Gastrocnemius medialis (tissue), 4 donors: ENCODE measurements at regions of chr19 and their contacts with region 1.

Region 1: GRCh38 chr19:10717356-10718204 is at the start of gene DNM2:
- DNase-seq: peak; percentile 100
- ATAC-seq: peak; percentile 94 to 97
- H3K4me3 ChIP-seq: peak within 1 kb of the TSS; percentile 71 to 98 (median 82)
- H3K27ac ChIP-seq: peak within 1 kb of the TSS; percentile 82 to 99 (median 94)
- H3K4me1 ChIP-seq: peaks cover 25 to 27% of the 10 kb centered on the region in 2 donors
- H3K27me3 ChIP-seq: no peaks in the 10 kb centered on the region
- CTCF ChIP-seq: peak; percentile 77 to 90 (median 83)
- POLR2A ChIP-seq: peak; percentile 82 to 89
- total RNA-seq, gene DNM2: 76.2 to 131 (median 108) TPM

Region 2: DNA sequence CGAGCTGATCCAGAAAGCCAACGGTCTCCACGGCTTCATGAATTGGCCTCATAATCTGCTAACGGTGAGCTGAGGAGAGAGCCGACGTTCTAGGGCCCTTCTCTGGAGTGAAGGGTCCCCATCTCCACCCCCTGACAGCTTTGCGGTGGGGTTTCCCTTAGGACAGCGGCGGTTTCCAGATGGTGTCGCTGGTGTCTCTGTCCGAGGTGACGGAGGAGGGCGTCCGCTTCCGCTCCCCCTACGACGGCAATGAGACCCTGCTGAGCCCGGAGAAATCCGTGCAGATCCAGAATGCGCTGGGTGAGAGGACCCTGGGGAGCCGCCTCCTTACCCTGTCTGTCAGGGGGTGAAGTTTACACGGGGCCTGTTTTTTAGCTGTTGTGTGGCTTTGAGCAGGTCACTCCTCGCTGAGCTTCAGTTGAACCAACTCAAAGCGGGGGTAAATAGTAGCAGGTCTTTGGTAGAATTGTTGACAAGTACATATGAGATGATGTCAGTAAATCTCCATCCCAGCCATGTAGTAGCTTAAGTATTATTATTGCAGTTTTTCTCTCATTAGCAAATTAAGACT is 15.5 kb before region 1 on chr19:
- in situ Hi-C with region 1: no loop called
- intact Hi-C with region 1: loop called (anchors 1 kb)
- DNase-seq: no peak
- ATAC-seq: peak; percentile 5 to 11
- H3K4me3 ChIP-seq: peak overlapping the region; percentile 84 to 100 (median 90)
- H3K27ac ChIP-seq: peak overlapping the region; percentile 70 to 87 (median 80)
- H3K4me1 ChIP-seq: peaks cover 12 to 13% of the 10 kb centered on the region in 2 donors
- H3K27me3 ChIP-seq: no peaks in the 10 kb centered on the region
- CTCF ChIP-seq: no peak
- POLR2A ChIP-seq: no peak

Region 3: GRCh38 chr19:10769533-10770491 is 52.2 kb after region 1 on chr19:
- in situ Hi-C with region 1: loop called in 1 of 4 experiments (anchors 5 kb)
- intact Hi-C with region 1: loop called (anchors 1 kb)
- DNase-seq: peak; percentile 69 to 80
- ATAC-seq: peak; percentile 94 to 96
- H3K4me3 ChIP-seq: peak overlapping the region in 1 of 4 donors; percentile 23
- H3K27ac ChIP-seq: peak overlapping the region; percentile 75 to 85 (median 82)
- H3K4me1 ChIP-seq: peaks cover 43 to 50% of the 10 kb centered on the region in 2 donors
- H3K27me3 ChIP-seq: no peaks in the 10 kb centered on the region
- CTCF ChIP-seq: peak in 4 of 5 experiments; percentile 35 to 61 (median 36)
- POLR2A ChIP-seq: no peak

Region 4: GRCh38 chr19:10864538-10864899 is 146.9 kb after region 1 on chr19:
- in situ Hi-C with region 1: loop called in 2 of 4 experiments (anchors 5 kb)
- intact Hi-C with region 1: loop called (anchors 1 kb)
- DNase-seq: peak; percentile 59 to 75
- ATAC-seq: peak; percentile 82 to 84
- H3K4me3 ChIP-seq: no peak overlapping the region
- H3K27ac ChIP-seq: peak overlapping the region in 2 of 4 donors; percentile 19 to 22
- H3K4me1 ChIP-seq: peaks cover 4 to 7% of the 10 kb centered on the region in 2 donors
- H3K27me3 ChIP-seq: no peaks in the 10 kb centered on the region
- CTCF ChIP-seq: peak; percentile 78 to 92 (median 85)
- POLR2A ChIP-seq: no peak